ENCODE measurements at regions of chr18 and their contacts with region 1.

Region 1: DNA sequence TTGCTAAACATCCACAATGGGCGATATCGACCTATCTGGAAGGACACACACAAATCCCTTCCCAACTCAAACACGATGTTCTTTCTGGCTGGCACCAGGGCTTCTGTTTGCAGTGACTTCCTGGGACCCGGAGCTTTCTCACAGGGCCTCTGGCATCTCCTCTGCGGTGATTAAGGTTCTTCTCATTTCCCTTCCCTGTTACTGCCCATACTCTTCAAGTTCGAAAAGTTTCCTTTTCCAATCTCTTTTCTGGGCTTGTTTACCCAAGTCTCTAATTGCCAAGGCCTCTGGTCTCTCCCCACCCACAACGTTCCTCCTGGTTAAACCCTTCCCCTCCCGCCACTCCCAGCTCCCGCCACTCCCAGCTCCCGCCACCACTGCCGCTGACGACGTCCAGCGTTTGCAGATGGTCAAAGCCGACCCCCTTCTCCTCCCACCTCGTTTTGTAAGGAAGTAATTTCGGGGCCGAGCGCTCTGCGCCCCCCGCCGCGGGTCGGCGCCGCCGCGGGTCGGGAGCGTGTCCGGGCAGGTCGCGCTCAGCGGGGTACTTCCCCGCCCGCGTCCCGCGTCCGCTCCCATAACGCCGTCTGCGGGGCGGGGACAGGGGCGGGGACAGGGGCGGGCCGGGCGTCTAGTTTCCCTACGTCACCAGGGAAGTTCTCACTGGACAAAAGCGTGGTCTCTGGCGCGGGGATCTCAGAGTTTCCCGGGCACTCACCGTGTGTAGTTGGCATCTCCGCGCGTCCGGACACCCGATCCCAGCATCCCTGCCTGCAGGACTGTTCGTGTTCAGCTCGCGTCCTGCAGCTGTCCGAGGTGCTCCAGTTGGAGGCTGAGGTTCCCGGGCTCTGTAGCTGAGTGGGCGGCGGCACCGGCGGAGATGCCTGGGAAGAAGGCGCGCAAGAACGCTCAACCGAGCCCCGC is at the start of gene PMAIP1:
- DNase-seq: peak; percentile 86 to 95 (median 87)
- H3K4me3 ChIP-seq: peak within 1 kb of the TSS; percentile 93 to 97 (median 95)
- H3K4me3 Mint-ChIP-seq: peak within 1 kb of the TSS; percentile 95 to 96
- H3K27ac ChIP-seq: peak within 1 kb of the TSS; percentile 96 to 97
- H3K27ac Mint-ChIP-seq: peak within 1 kb of the TSS; percentile 95 to 99 (median 97)
- H3K4me1 ChIP-seq: peaks cover 26 to 53% of the 10 kb centered on the region in 2 donors
- H3K4me1 Mint-ChIP-seq: peaks cover 46% of the 10 kb centered on the region
- H3K27me3 ChIP-seq: no peaks in the 10 kb centered on the region
- H3K27me3 Mint-ChIP-seq: peaks cover 0 to 7% (median 4%) of the 10 kb centered on the region in 3 donors
- CTCF ChIP-seq: no peak
- polyA plus RNA-seq, gene PMAIP1: 40.8 to 56.6 (median 55.7) TPM

Region 2: GRCh38 chr18:59742325-59743111 is 157.0 kb before region 1 on chr18:
- intact Hi-C with region 1: no loop called
- DNase-seq: no peak
- H3K4me3 ChIP-seq: no peak overlapping the region
- H3K4me3 Mint-ChIP-seq: no peak overlapping the region
- H3K27ac ChIP-seq: no peak overlapping the region
- H3K27ac Mint-ChIP-seq: no peak overlapping the region
- H3K4me1 ChIP-seq: no peaks in the 10 kb centered on the region
- H3K4me1 Mint-ChIP-seq: no peaks in the 10 kb centered on the region
- H3K27me3 ChIP-seq: no peaks in the 10 kb centered on the region
- H3K27me3 Mint-ChIP-seq: peaks cover 0 to 9% (median 2%) of the 10 kb centered on the region in 3 donors
- CTCF ChIP-seq: no peak

Region 3: DNA sequence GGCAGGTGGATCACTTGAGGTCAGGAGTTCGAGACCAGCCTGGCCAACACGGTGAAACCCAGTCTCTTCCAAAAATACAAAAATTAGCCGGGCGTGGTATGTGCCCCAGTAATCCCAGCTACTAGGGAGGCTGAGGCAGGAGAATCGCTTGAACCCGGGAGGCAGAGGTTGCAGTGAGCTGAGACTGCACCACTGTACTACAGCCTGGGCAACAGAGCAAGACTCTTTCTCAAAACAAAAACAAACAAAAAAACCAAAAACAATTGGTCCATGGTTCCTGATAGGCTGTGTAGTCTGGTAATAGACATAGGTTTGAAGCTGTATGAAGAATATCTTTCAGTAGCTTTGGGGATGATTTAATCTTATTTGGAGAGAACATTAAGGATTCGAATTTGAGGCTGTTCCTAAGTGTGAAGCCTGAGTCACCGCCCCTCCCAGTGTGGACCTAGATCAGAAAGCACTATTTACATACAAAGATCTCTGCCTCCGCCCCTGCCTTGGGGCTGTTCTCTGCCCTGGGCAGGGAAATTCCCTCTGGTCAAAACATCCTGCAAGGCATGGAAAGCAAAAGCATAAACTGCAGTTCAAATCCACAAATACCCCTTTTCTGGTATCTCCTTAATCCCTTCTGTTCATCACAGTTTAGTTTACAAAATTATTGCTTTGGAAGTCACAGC is 52.6 kb before region 1 on chr18:
- intact Hi-C with region 1: no loop called
- DNase-seq: no peak
- H3K4me3 ChIP-seq: no peak overlapping the region
- H3K4me3 Mint-ChIP-seq: no peak overlapping the region
- H3K27ac ChIP-seq: no peak overlapping the region
- H3K27ac Mint-ChIP-seq: no peak overlapping the region
- H3K4me1 ChIP-seq: no peaks in the 10 kb centered on the region
- H3K4me1 Mint-ChIP-seq: peaks cover 4% of the 10 kb centered on the region
- H3K27me3 ChIP-seq: no peaks in the 10 kb centered on the region
- H3K27me3 Mint-ChIP-seq: peaks cover 2 to 6% (median 3%) of the 10 kb centered on the region in 3 donors
- CTCF ChIP-seq: no peak

Region 4: GRCh38 chr18:59885579-59886163 is 13.9 kb before region 1 on chr18:
- intact Hi-C with region 1: loop called in 1 of 2 experiments (anchors 2 kb)
- DNase-seq: peak; percentile 59 to 84 (median 79)
- H3K4me3 ChIP-seq: peak overlapping the region in 2 of 3 experiments; percentile 2 to 63
- H3K4me3 Mint-ChIP-seq: peak overlapping the region in 1 of 2 donors; percentile 57
- H3K27ac ChIP-seq: peak overlapping the region; percentile 75 to 84
- H3K27ac Mint-ChIP-seq: peak overlapping the region; percentile 79 to 93 (median 87)
- H3K4me1 ChIP-seq: peaks cover 57 to 61% of the 10 kb centered on the region in 2 donors
- H3K4me1 Mint-ChIP-seq: peaks cover 46% of the 10 kb centered on the region
- H3K27me3 ChIP-seq: no peaks in the 10 kb centered on the region
- H3K27me3 Mint-ChIP-seq: no peaks in the 10 kb centered on the region
- CTCF ChIP-seq: no peak

Region 5: DNA sequence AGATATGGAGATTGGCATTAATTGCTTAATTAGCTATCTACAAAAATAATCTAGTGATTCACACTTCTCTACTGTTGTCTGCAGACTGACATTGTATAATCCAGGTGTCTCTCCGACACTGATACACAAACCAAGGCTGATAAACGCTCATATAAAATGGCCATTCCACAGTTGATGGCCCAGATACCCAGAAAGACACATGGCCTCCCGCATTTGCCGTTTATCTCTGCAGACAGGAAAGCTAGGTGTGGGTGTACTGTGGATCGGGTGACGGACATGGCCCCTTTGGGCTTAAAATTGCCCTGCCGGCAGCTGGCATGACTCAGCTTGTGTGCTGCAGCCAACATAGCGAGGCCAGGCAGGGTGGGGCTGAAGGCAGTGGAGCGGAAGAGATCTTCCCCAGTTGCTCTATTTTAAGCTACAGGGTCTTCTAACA is 18.8 kb after region 1 on chr18:
- intact Hi-C with region 1: loop called in 1 of 2 experiments (anchors 2 kb)
- DNase-seq: peak; percentile 44 to 68 (median 53)
- H3K4me3 ChIP-seq: peak overlapping the region in 2 of 3 experiments; percentile 36 to 66
- H3K4me3 Mint-ChIP-seq: peak overlapping the region; percentile 70 to 87
- H3K27ac ChIP-seq: peak overlapping the region; percentile 40
- H3K27ac Mint-ChIP-seq: peak overlapping the region; percentile 80 to 94 (median 93)
- H3K4me1 ChIP-seq: peaks cover 33 to 53% of the 10 kb centered on the region in 2 donors
- H3K4me1 Mint-ChIP-seq: peaks cover 48% of the 10 kb centered on the region
- H3K27me3 ChIP-seq: no peaks in the 10 kb centered on the region
- H3K27me3 Mint-ChIP-seq: no peaks in the 10 kb centered on the region
- CTCF ChIP-seq: no peak

Region 6: DNA sequence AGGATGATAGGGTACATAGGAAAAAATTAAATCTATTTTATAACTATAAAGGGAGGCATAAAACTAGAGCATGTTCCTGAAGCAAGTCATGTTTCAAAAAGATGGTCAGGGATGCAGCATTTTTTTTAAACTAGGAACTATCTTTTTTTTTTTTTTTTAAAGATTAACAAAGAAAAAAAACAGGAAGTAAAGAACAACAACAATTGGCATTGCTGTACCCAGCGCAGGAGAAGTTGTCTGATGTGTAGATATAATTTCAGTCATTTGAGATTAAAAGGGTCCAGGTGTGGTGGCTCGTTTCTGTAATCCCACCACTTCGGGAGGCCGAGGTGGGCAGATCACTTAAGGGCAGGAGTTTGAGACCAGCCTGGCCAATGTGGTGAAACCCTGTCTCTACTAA is 41.8 kb after region 1 on chr18:
- intact Hi-C with region 1: loop called in 1 of 2 experiments (anchors 10 kb)
- DNase-seq: peak in 2 of 3 donors; percentile 47 to 48
- H3K4me3 ChIP-seq: no peak overlapping the region
- H3K4me3 Mint-ChIP-seq: no peak overlapping the region
- H3K27ac ChIP-seq: no peak overlapping the region
- H3K27ac Mint-ChIP-seq: peak overlapping the region in 5 of 7 donors; percentile 63 to 81 (median 70)
- H3K4me1 ChIP-seq: peaks cover 21 to 25% of the 10 kb centered on the region in 2 donors
- H3K4me1 Mint-ChIP-seq: peaks cover 22% of the 10 kb centered on the region
- H3K27me3 ChIP-seq: no peaks in the 10 kb centered on the region
- H3K27me3 Mint-ChIP-seq: peaks cover 0 to 7% (median 2%) of the 10 kb centered on the region in 3 donors
- CTCF ChIP-seq: no peak

Measured in CD14-positive monocyte (primary cell).